ENCODE measurements at regions of chr12 and their contacts with region 1.

Region 1: GRCh38 chr12:78308701-78309100 is 478.0 kb downstream of the NAV3 start:
- DNase-seq: no peak
- ATAC-seq: no peak
- H3K4me3 ChIP-seq: no peak overlapping the region
- H3K4me3 Mint-ChIP-seq: no peak overlapping the region
- H3K27ac ChIP-seq: no peak overlapping the region
- H3K27ac Mint-ChIP-seq: no peak overlapping the region
- H3K4me1 ChIP-seq: no peaks in the 10 kb centered on the region
- H3K4me1 Mint-ChIP-seq: no peaks in the 10 kb centered on the region
- H3K27me3 ChIP-seq: no peaks in the 10 kb centered on the region
- H3K27me3 Mint-ChIP-seq: no peaks in the 10 kb centered on the region
- CTCF ChIP-seq: no peak

Region 2: GRCh38 chr12:78290606-78291345 is 17.9 kb before region 1 on chr12:
- intact Hi-C with region 1: loop called (anchors 1 kb)
- DNase-seq: no peak
- ATAC-seq: no peak
- H3K4me3 ChIP-seq: no peak overlapping the region
- H3K4me3 Mint-ChIP-seq: no peak overlapping the region
- H3K27ac ChIP-seq: no peak overlapping the region
- H3K27ac Mint-ChIP-seq: no peak overlapping the region
- H3K4me1 ChIP-seq: no peaks in the 10 kb centered on the region
- H3K4me1 Mint-ChIP-seq: no peaks in the 10 kb centered on the region
- H3K27me3 ChIP-seq: no peaks in the 10 kb centered on the region
- H3K27me3 Mint-ChIP-seq: no peaks in the 10 kb centered on the region
- CTCF ChIP-seq: no peak

Region 3: DNA sequence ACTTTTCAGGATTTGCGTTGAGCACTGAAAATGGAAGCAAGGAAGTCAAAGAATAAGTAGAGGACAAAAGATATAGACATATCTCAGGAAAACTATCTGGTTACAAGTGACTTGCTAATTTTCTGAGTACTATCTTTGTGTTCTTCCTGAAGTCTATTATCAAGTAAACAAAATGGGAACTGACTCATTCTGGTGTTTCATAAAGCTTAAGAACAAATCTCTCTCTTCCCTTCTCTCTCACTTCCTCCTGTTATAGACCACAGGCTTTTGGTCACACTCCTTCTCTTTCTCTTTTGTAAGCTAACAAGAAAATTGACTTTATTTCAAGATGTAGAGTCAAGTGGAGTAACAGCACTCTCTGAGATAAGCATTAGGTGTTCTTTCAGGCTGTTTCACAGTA is 149.2 kb after region 1 on chr12:
- intact Hi-C with region 1: no loop called
- DNase-seq: no peak
- ATAC-seq: no peak
- H3K4me3 ChIP-seq: no peak overlapping the region
- H3K4me3 Mint-ChIP-seq: no peak overlapping the region
- H3K27ac ChIP-seq: no peak overlapping the region
- H3K27ac Mint-ChIP-seq: no peak overlapping the region
- H3K4me1 ChIP-seq: no peaks in the 10 kb centered on the region
- H3K4me1 Mint-ChIP-seq: no peaks in the 10 kb centered on the region
- H3K27me3 ChIP-seq: no peaks in the 10 kb centered on the region
- H3K27me3 Mint-ChIP-seq: no peaks in the 10 kb centered on the region
- CTCF ChIP-seq: no peak

Region 4: GRCh38 chr12:78490861-78491260 is 182.2 kb after region 1 on chr12:
- intact Hi-C with region 1: no loop called
- DNase-seq: no peak
- ATAC-seq: no peak
- H3K4me3 ChIP-seq: no peak overlapping the region
- H3K4me3 Mint-ChIP-seq: no peak overlapping the region
- H3K27ac ChIP-seq: no peak overlapping the region
- H3K27ac Mint-ChIP-seq: no peak overlapping the region
- H3K4me1 ChIP-seq: no peaks in the 10 kb centered on the region
- H3K4me1 Mint-ChIP-seq: no peaks in the 10 kb centered on the region
- H3K27me3 ChIP-seq: no peaks in the 10 kb centered on the region
- H3K27me3 Mint-ChIP-seq: no peaks in the 10 kb centered on the region
- CTCF ChIP-seq: no peak

Measured in natural killer cell (primary cell).